Common myeloid progenitor, CD34-positive (primary cell): ENCODE measurements at regions of chr12 and their contacts with region 1.

Region 1: DNA sequence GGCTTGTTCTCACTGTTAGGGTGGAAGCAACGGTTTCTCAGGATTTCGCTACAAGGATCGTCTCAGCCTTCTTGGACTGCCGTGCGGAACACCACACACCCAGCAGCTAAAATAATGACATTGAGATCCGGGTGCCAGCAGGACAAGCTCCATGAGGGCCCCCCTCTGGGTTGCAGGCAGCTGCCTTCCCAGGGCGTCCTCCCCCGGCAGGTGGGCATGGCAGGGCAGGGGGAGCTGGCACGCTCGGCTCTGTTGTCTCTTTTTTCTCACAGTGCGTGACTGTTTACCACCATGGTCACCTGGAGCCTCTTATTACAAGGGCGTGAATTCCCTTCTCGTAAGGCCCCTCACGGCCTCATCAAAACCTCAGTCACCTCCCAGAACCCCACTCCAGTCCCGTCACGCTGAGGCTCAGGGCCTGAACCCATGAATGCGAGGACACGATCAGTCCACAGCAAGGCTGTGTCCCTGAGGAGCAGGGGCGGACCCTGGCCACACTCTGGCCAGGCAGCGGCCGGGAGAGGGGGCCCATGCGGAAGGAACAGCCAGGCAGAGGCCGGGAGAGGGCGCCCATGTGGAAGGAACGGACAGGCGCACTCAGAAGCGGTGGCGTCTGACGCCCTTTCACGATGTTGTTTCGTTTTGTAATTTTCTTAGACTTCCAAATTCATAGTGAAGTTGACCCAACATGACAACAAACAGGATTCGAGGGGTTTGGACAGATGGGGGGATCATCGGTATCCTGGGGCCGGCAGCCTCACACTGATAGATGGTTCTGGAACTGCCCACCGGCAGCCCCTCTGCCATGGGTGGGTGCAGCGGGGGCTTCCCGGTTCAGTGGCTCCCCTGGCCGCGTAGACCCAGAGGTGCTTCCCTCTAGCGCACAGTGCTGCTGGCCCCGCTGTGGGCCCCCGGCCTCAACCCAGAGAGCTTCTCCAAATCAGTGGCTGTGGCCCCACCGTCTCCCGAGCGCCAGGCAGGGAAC is 10.0 kb downstream of the LRCOL1 start:
- DNase-seq: peak; percentile 69 to 72 (median 70)
- H3K4me3 ChIP-seq: peak overlapping the region in 6 of 7 experiments; percentile 51 to 85 (median 75)
- H3K27ac ChIP-seq: no peak overlapping the region
- H3K4me1 ChIP-seq: peaks cover 0 to 40% (median 19%) of the 10 kb centered on the region in 4 experiments
- H3K27me3 ChIP-seq: peaks cover 0 to 44% (median 20%) of the 10 kb centered on the region in 5 experiments

Region 2: GRCh38 chr12:132585177-132585576 is 15.2 kb before region 1 on chr12:
- CTCF ChIA-PET with region 1: interaction called, 10 read pairs
- POLR2A ChIA-PET with region 1: no interaction called
- DNase-seq: no peak
- H3K4me3 ChIP-seq: no peak overlapping the region
- H3K27ac ChIP-seq: no peak overlapping the region
- H3K4me1 ChIP-seq: peaks cover 0 to 6% (median 4%) of the 10 kb centered on the region in 4 experiments
- H3K27me3 ChIP-seq: no peaks in the 10 kb centered on the region

Region 3: DNA sequence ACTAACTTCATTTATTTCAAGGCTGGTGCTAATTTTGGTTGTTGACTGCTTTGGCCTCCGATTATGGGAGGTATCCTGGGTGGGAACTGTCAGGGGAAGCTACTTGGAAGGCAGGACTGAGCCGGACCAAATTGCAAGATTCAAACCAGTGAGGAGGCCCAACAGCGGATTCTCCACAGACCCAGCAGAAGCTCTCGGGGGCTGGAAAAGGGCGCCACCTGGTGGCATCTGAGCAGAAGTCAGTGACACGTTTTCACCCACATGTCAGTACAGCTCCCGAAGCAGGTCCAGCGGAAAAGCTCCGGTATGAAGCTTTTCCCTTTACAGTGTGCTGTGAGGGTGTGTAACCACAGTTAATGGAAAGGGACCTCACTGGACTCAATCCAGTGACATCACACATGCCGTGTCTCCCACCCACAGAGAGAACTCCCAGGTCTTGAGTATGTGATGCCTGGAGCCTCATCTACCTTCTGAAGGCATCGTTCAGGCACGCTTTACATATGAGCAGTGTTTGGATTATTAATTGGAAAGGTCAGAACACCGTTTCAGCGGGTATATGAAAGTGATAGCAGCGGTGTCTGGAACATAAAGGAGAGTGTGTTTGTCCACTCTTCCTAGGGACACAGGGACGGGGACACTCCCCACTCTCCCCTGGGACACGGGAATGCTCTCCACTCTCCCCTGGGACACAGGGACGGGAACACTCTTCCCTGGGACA is 14.7 kb after region 1 on chr12:
- CTCF ChIA-PET with region 1: interaction called, 147 read pairs
- POLR2A ChIA-PET with region 1: interaction called, 6 read pairs
- DNase-seq: peak; percentile 82 to 91 (median 87)
- H3K4me3 ChIP-seq: no peak overlapping the region
- H3K27ac ChIP-seq: no peak overlapping the region
- H3K4me1 ChIP-seq: peaks cover 0 to 10% (median 6%) of the 10 kb centered on the region in 4 experiments
- H3K27me3 ChIP-seq: peaks cover 13 to 64% (median 14%) of the 10 kb centered on the region in 5 experiments